ENCODE measurements at regions of chr1 and their contacts with region 1.

Region 1: DNA sequence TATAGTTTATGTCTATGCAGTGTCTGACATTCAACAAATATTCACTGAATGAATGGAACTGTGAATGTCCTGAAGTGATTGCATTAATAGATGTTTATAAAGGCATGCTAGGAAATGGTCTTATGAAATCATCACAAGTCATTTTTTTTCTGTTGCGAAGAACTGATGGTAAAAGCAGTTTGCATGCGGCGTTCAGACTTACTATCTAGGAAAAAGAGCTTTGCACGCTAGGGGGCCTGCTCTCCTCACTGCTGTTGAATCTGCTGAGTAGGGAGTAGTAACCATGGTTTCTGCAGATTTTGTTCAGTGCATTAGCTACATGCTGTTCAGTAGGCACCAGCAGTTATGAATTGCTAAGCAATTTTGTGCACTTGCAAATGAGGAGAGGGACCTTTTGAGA is 57.9 kb downstream of the CENPF start:
- DNase-seq: peak; percentile 37
- H3K4me3 ChIP-seq: no peak overlapping the region
- H3K27me3 ChIP-seq: no peaks in the 10 kb centered on the region
- CTCF ChIP-seq: peak; percentile 83

Region 2: GRCh38 chr1:214648801-214649200 is 12.1 kb before region 1 on chr1:
- CTCF ChIA-PET with region 1: interaction called, 37 read pairs
- POLR2A ChIA-PET with region 1: no interaction called
- DNase-seq: no peak
- H3K4me3 ChIP-seq: no peak overlapping the region
- H3K27me3 ChIP-seq: no peaks in the 10 kb centered on the region
- CTCF ChIP-seq: no peak

Region 3: GRCh38 chr1:214719207-214719606 is 58.3 kb after region 1 on chr1:
- CTCF ChIA-PET with region 1: no interaction called
- POLR2A ChIA-PET with region 1: no interaction called
- DNase-seq: no peak
- H3K4me3 ChIP-seq: no peak overlapping the region
- H3K27me3 ChIP-seq: no peaks in the 10 kb centered on the region
- CTCF ChIP-seq: no peak

Region 4: GRCh38 chr1:214857716-214858115 is 196.9 kb after region 1 on chr1:
- CTCF ChIA-PET with region 1: no interaction called
- POLR2A ChIA-PET with region 1: no interaction called
- DNase-seq: peak; percentile 73
- H3K4me3 ChIP-seq: no peak overlapping the region
- H3K27me3 ChIP-seq: no peaks in the 10 kb centered on the region
- CTCF ChIP-seq: no peak

Region 5: GRCh38 chr1:215146341-215146826 is 485.5 kb after region 1 on chr1:
- CTCF ChIA-PET with region 1: interaction called, 54 read pairs
- POLR2A ChIA-PET with region 1: no interaction called
- DNase-seq: peak; percentile 8
- H3K4me3 ChIP-seq: no peak overlapping the region
- H3K27me3 ChIP-seq: no peaks in the 10 kb centered on the region
- CTCF ChIP-seq: peak; percentile 59

Region 6: GRCh38 chr1:215517441-215517891 is 856.6 kb after region 1 on chr1:
- CTCF ChIA-PET with region 1: interaction called, 11 read pairs
- POLR2A ChIA-PET with region 1: no interaction called
- DNase-seq: no peak
- H3K4me3 ChIP-seq: no peak overlapping the region
- H3K27me3 ChIP-seq: no peaks in the 10 kb centered on the region
- CTCF ChIP-seq: peak; percentile 36

Region 7: GRCh38 chr1:215526553-215527151 is 865.8 kb after region 1 on chr1:
- CTCF ChIA-PET with region 1: interaction called, 72 read pairs
- POLR2A ChIA-PET with region 1: no interaction called
- DNase-seq: no peak
- H3K4me3 ChIP-seq: no peak overlapping the region
- H3K27me3 ChIP-seq: no peaks in the 10 kb centered on the region
- CTCF ChIP-seq: peak; percentile 39